ENCODE measurements at regions of chr1 and their contacts with region 1.

Region 1: DNA sequence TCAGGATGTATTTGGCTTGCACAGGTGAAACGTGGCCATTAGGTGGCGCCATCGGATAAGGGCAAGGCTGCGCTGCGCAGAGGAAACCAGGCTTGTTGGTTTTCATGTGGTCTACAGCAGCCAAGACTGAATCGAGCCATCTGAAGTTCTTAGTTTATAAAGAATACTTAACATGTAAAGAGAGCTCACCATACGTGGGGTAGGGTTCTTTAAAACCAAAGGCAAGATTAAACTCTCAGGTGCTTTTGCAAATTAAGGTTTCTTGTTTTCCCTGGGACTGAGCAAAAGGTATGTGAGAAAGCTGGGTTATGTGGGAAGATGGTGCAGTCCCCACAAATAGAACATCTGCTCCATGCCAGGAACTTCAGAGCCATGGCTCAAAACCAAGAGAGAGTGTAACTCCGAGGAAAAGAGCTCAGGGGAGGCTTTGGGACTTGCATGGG is 9.3 kb downstream of the MASP2 start:
- DNase-seq: peak; percentile 92
- H3K4me3 Mint-ChIP-seq: no peak overlapping the region
- H3K27ac Mint-ChIP-seq: no peak overlapping the region
- H3K4me1 Mint-ChIP-seq: peaks cover 4% of the 10 kb centered on the region
- H3K27me3 Mint-ChIP-seq: no peaks in the 10 kb centered on the region

Region 2: GRCh38 chr1:10867138-10867721 is 170.5 kb before region 1 on chr1:
- CTCF ChIA-PET with region 1: no interaction called
- POLR2A ChIA-PET with region 1: no interaction called
- intact Hi-C with region 1: no loop called
- DNase-seq: peak; percentile 60
- H3K4me3 Mint-ChIP-seq: no peak overlapping the region
- H3K27ac Mint-ChIP-seq: no peak overlapping the region
- H3K4me1 Mint-ChIP-seq: peaks cover 10% of the 10 kb centered on the region
- H3K27me3 Mint-ChIP-seq: peaks cover 60% of the 10 kb centered on the region

Region 3: DNA sequence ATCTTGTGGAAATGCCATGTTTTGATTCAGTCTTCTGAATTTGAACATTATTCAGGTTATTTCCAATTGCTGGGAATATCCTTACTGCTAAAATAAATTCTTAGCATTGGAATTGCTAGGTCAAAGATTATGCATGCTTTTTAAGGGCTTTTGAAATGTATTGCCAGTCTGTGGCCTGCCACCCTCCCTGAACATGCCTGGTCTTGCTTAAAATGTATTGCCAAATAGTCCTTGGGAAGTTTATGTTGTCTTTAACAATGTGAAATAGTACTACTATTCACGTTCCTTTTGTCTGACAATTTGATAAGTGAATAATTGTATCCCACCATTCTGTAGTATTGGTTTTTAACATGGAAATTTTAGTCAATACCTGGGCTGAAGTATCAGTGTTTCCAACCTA is 11.7 kb before region 1 on chr1:
- CTCF ChIA-PET with region 1: interaction called, 10 read pairs
- POLR2A ChIA-PET with region 1: interaction called, 4 read pairs
- intact Hi-C with region 1: no loop called
- DNase-seq: no peak
- H3K4me3 Mint-ChIP-seq: no peak overlapping the region
- H3K27ac Mint-ChIP-seq: peak overlapping the region; percentile 38
- H3K4me1 Mint-ChIP-seq: peaks cover 16% of the 10 kb centered on the region
- H3K27me3 Mint-ChIP-seq: no peaks in the 10 kb centered on the region

Region 4: GRCh38 chr1:11072216-11072917 is 34.6 kb after region 1 on chr1:
- CTCF ChIA-PET with region 1: interaction called, 16 read pairs
- POLR2A ChIA-PET with region 1: no interaction called
- intact Hi-C with region 1: no loop called
- DNase-seq: no peak
- H3K4me3 Mint-ChIP-seq: no peak overlapping the region
- H3K27ac Mint-ChIP-seq: no peak overlapping the region
- H3K4me1 Mint-ChIP-seq: peaks cover 2% of the 10 kb centered on the region
- H3K27me3 Mint-ChIP-seq: no peaks in the 10 kb centered on the region

Region 5: GRCh38 chr1:11109047-11109760 is 71.4 kb after region 1 on chr1:
- CTCF ChIA-PET with region 1: interaction called, 11 read pairs
- POLR2A ChIA-PET with region 1: no interaction called
- intact Hi-C with region 1: no loop called
- DNase-seq: no peak
- H3K4me3 Mint-ChIP-seq: no peak overlapping the region
- H3K27ac Mint-ChIP-seq: no peak overlapping the region
- H3K4me1 Mint-ChIP-seq: no peaks in the 10 kb centered on the region
- H3K27me3 Mint-ChIP-seq: no peaks in the 10 kb centered on the region

Region 6: GRCh38 chr1:11227106-11228077 is 189.6 kb after region 1 on chr1:
- CTCF ChIA-PET with region 1: interaction called, 12 read pairs
- POLR2A ChIA-PET with region 1: no interaction called
- intact Hi-C with region 1: no loop called
- DNase-seq: no peak
- H3K4me3 Mint-ChIP-seq: no peak overlapping the region
- H3K27ac Mint-ChIP-seq: no peak overlapping the region
- H3K4me1 Mint-ChIP-seq: peaks cover 13% of the 10 kb centered on the region
- H3K27me3 Mint-ChIP-seq: no peaks in the 10 kb centered on the region

Region 7: GRCh38 chr1:11645670-11646265 is 608.0 kb after region 1 on chr1:
- CTCF ChIA-PET with region 1: interaction called, 75 read pairs
- POLR2A ChIA-PET with region 1: no interaction called
- intact Hi-C with region 1: loop called (anchors 1 kb)
- DNase-seq: peak; percentile 88
- H3K4me3 Mint-ChIP-seq: no peak overlapping the region
- H3K27ac Mint-ChIP-seq: no peak overlapping the region
- H3K4me1 Mint-ChIP-seq: peaks cover 11% of the 10 kb centered on the region
- H3K27me3 Mint-ChIP-seq: no peaks in the 10 kb centered on the region

Region 8: GRCh38 chr1:12124693-12125421 is 1087.1 kb after region 1 on chr1:
- CTCF ChIA-PET with region 1: no interaction called
- POLR2A ChIA-PET with region 1: no interaction called
- intact Hi-C with region 1: no loop called
- DNase-seq: peak; percentile 86
- H3K4me3 Mint-ChIP-seq: no peak overlapping the region
- H3K27ac Mint-ChIP-seq: peak overlapping the region; percentile 42
- H3K4me1 Mint-ChIP-seq: peaks cover 52% of the 10 kb centered on the region
- H3K27me3 Mint-ChIP-seq: no peaks in the 10 kb centered on the region

Measured in activated CD4-positive, alpha-beta memory T cell treated with anti-CD3 and anti-CD28 coated beads for 36 hours (primary cell).